ENCODE measurements at regions of chr9 and their contacts with region 1.

Region 1: GRCh38 chr9:35732122-35732799 is at the starts of genes CREB3 and TLN1:
- DNase-seq: peak; percentile 99
- H3K4me3 Mint-ChIP-seq: no peak within 1 kb of the TSS
- H3K27ac Mint-ChIP-seq: no peak within 1 kb of the TSS
- H3K4me1 Mint-ChIP-seq: peaks cover 22% of the 10 kb centered on the region
- H3K27me3 Mint-ChIP-seq: no peaks in the 10 kb centered on the region
- total RNA-seq, gene CREB3: 27.7 to 29.9 TPM
- total RNA-seq, gene TLN1: 285 to 287 TPM

Region 2: DNA sequence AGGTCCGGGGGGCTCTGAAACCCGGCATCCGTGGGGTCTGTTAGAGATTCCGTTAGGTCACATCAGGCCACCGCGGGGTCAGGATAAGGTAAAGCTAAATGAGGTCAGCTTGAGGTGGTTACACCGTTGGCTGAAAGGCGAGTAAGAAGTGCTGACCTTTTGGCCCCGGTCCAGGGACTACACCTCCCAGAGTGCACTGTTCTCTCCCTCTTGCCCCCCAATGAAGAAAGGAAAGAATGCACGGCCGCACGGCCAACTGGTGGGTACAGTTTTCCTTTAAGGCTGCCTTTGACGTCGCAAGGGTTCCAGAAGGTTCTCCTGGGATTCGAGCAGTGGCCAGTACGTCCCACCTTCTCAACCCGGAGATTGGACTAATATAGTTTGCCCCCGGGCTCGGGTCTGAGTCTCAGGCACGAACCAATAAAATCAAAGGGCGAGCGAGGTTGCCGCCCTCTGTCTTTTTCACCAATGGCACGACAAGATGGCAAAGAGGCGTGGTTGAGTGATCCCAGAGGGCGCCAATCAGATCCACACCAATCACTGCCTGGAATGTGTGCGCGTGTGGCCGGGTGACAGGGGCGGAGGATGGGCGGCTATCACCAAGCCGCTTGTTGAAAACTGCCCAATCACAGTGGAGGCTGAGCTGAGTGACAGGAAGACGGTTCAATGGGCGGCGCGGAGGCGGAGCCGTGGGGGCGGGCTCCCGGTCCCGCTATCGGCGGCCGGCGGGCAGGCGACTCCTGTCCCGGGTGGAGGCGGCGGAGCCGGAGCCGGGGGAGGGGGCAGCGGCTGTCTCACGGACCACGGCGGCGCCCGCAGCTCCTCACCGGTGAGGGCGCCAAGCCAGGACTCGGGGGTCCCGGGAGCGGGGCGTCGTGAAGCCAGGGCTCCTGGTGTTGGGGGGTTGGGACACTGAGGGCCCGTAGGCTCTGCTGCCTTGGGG is 743.0 kb before region 1 on chr9 and contains the start of gene DNAJB5:
- CTCF ChIA-PET with region 1: no interaction called
- POLR2A ChIA-PET with region 1: no interaction called
- intact Hi-C with region 1: loop called (anchors 2 kb)
- DNase-seq: peak; percentile 99
- H3K4me3 Mint-ChIP-seq: peak within 1 kb of the TSS; percentile 89
- H3K27ac Mint-ChIP-seq: peak within 1 kb of the TSS; percentile 89
- H3K4me1 Mint-ChIP-seq: peaks cover 81% of the 10 kb centered on the region
- H3K27me3 Mint-ChIP-seq: no peaks in the 10 kb centered on the region
- total RNA-seq, gene DNAJB5: 11.5 to 12.0 TPM

Region 3: GRCh38 chr9:35646533-35647265 is 85.6 kb before region 1 on chr9:
- CTCF ChIA-PET with region 1: interaction called, 42 read pairs
- POLR2A ChIA-PET with region 1: interaction called, 17 read pairs
- intact Hi-C with region 1: loop called (anchors 1 kb)
- DNase-seq: peak; percentile 95
- H3K4me3 Mint-ChIP-seq: peak overlapping the region; percentile 91
- H3K27ac Mint-ChIP-seq: peak overlapping the region; percentile 93
- H3K4me1 Mint-ChIP-seq: peaks cover 49% of the 10 kb centered on the region
- H3K27me3 Mint-ChIP-seq: no peaks in the 10 kb centered on the region

Region 4: GRCh38 chr9:35696525-35697215 is 35.6 kb before region 1 on chr9:
- CTCF ChIA-PET with region 1: interaction called, 82 read pairs
- POLR2A ChIA-PET with region 1: interaction called, 6 read pairs
- intact Hi-C with region 1: no loop called
- DNase-seq: peak; percentile 71
- H3K4me3 Mint-ChIP-seq: no peak overlapping the region
- H3K27ac Mint-ChIP-seq: no peak overlapping the region
- H3K4me1 Mint-ChIP-seq: peaks cover 2% of the 10 kb centered on the region
- H3K27me3 Mint-ChIP-seq: no peaks in the 10 kb centered on the region

Region 5: DNA sequence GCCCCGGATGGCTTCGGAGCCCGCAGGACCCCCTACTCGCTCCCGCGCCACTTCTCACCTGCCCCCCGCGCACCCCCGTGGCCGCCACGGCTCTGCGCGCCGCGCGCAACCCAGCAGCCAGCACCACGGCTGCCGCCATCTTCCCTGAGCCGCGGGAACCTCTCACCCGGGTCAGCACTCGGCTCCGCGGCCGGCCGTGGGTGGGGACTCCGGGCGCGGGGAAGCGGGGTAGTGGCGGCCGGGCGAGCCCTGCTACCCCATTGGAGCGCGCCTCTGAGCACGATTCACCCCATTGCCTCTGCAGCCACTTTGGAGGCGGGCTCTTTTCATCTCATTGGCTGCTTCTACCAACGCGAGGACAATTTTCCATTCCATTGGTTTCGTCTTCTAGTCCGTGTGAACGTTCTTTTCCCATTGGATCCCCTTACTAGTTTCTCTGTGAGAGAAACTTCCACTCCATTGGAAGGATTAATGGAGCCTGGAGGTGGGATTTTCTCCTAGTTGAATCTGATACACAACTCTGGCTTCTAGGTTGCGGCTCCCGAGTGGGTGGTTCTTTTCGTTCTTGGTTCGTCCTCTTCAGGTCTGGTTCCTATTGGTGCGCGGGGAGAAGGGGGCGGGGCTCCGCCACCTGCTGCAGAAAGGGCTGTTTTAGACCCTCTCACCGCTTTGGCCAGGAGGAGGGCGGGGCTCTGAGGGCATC is 82.7 kb after region 1 on chr9 and contains the start of gene HINT2:
- CTCF ChIA-PET with region 1: interaction called, 5 read pairs
- POLR2A ChIA-PET with region 1: interaction called, 6 read pairs
- intact Hi-C with region 1: loop called (anchors 1 kb)
- DNase-seq: peak; percentile 99
- H3K4me3 Mint-ChIP-seq: peak within 1 kb of the TSS; percentile 96
- H3K27ac Mint-ChIP-seq: peak within 1 kb of the TSS; percentile 93
- H3K4me1 Mint-ChIP-seq: peaks cover 33% of the 10 kb centered on the region
- H3K27me3 Mint-ChIP-seq: no peaks in the 10 kb centered on the region
- total RNA-seq, gene HINT2: 67.8 to 72.6 TPM

Region 6: DNA sequence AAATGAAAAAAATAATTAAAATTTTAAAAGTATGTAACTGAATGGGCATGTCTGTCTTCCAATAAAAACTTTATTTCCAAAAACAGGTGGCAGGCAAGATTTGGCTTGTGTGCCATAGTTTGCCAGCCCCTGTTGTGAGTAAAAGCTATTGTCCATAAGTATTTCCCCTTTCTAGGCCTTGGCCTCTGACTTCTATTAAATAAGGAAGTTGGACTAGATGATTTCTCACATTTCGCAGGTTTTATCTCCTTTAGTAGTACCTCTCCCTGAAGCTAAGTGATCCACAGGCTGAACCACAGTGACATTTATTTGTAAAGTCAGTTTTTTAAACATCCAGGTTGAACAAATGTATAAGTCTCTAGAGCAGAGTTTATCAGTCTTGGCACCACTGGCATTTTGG is 345.8 kb after region 1 on chr9:
- CTCF ChIA-PET with region 1: no interaction called
- POLR2A ChIA-PET with region 1: no interaction called
- intact Hi-C with region 1: no loop called
- DNase-seq: no peak
- H3K4me3 Mint-ChIP-seq: no peak overlapping the region
- H3K27ac Mint-ChIP-seq: no peak overlapping the region
- H3K4me1 Mint-ChIP-seq: no peaks in the 10 kb centered on the region
- H3K27me3 Mint-ChIP-seq: no peaks in the 10 kb centered on the region

Region 7: GRCh38 chr9:36190388-36191287 is 458.4 kb after region 1 on chr9 and contains the start of gene CLTA:
- CTCF ChIA-PET with region 1: no interaction called
- POLR2A ChIA-PET with region 1: no interaction called
- intact Hi-C with region 1: loop called (anchors 1 kb)
- DNase-seq: peak; percentile 98
- H3K4me3 Mint-ChIP-seq: peak within 1 kb of the TSS; percentile 94
- H3K27ac Mint-ChIP-seq: peak within 1 kb of the TSS; percentile 86
- H3K4me1 Mint-ChIP-seq: peaks cover 45% of the 10 kb centered on the region
- H3K27me3 Mint-ChIP-seq: no peaks in the 10 kb centered on the region
- total RNA-seq, gene CLTA: 139 to 144 TPM

Measured in activated CD4-positive, alpha-beta memory T cell treated with anti-CD3 and anti-CD28 coated beads for 36 hours (primary cell).